T-cell (primary cell): ENCODE measurements at regions of chr12 and their contacts with region 1.

Region 1: GRCh38 chr12:79769189-79769859 is 78.6 kb upstream of the PAWR start:
- DNase-seq: no peak
- ATAC-seq: no peak
- H3K4me3 ChIP-seq: no peak overlapping the region
- H3K4me3 Mint-ChIP-seq: no peak overlapping the region
- H3K27ac ChIP-seq: no peak overlapping the region
- H3K27ac Mint-ChIP-seq: no peak overlapping the region
- H3K4me1 ChIP-seq: no peaks in the 10 kb centered on the region
- H3K4me1 Mint-ChIP-seq: no peaks in the 10 kb centered on the region
- H3K27me3 ChIP-seq: no peaks in the 10 kb centered on the region
- H3K27me3 Mint-ChIP-seq: peaks cover 0 to 3% of the 10 kb centered on the region in 2 donors

Region 2: DNA sequence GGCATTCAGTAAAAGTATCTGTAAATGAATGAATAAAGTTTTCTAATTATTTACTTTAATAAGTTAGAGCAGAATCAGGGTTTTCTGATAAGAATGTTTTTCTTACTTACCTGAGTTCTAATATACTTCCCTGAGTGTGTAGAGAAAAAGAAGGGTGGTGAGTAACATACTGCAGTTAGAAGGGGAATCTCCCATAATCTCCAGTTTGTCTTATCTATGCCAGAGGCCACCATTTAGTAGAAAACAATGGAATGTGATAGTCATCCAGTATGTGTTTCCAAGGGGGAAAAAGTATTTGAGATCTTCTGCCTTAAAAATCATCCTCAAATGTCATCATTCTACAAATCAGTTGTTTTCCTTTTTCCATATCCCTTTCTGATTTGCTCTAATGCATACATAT is 22.1 kb before region 1 on chr12:
- CTCF ChIA-PET with region 1: no interaction called
- POLR2A ChIA-PET with region 1: interaction called in 1 of 2 experiments, 12 read pairs
- DNase-seq: no peak
- ATAC-seq: no peak
- H3K4me3 ChIP-seq: no peak overlapping the region
- H3K4me3 Mint-ChIP-seq: no peak overlapping the region
- H3K27ac ChIP-seq: no peak overlapping the region
- H3K27ac Mint-ChIP-seq: no peak overlapping the region
- H3K4me1 ChIP-seq: no peaks in the 10 kb centered on the region
- H3K4me1 Mint-ChIP-seq: no peaks in the 10 kb centered on the region
- H3K27me3 ChIP-seq: peaks cover 0 to 15% of the 10 kb centered on the region in 2 experiments
- H3K27me3 Mint-ChIP-seq: peaks cover 0 to 11% of the 10 kb centered on the region in 2 donors

Region 3: GRCh38 chr12:79826267-79827128 is 57.2 kb after region 1 on chr12:
- CTCF ChIA-PET with region 1: no interaction called
- POLR2A ChIA-PET with region 1: no interaction called
- DNase-seq: no peak
- ATAC-seq: no peak
- H3K4me3 ChIP-seq: no peak overlapping the region
- H3K4me3 Mint-ChIP-seq: no peak overlapping the region
- H3K27ac ChIP-seq: no peak overlapping the region
- H3K27ac Mint-ChIP-seq: no peak overlapping the region
- H3K4me1 ChIP-seq: peaks cover 3 to 12% of the 10 kb centered on the region in 2 experiments
- H3K4me1 Mint-ChIP-seq: peaks cover 41 to 45% (median 42%) of the 10 kb centered on the region in 3 donors
- H3K27me3 ChIP-seq: no peaks in the 10 kb centered on the region
- H3K27me3 Mint-ChIP-seq: no peaks in the 10 kb centered on the region